ENCODE measurements at regions of chr7 and their contacts with region 1.

Region 1: DNA sequence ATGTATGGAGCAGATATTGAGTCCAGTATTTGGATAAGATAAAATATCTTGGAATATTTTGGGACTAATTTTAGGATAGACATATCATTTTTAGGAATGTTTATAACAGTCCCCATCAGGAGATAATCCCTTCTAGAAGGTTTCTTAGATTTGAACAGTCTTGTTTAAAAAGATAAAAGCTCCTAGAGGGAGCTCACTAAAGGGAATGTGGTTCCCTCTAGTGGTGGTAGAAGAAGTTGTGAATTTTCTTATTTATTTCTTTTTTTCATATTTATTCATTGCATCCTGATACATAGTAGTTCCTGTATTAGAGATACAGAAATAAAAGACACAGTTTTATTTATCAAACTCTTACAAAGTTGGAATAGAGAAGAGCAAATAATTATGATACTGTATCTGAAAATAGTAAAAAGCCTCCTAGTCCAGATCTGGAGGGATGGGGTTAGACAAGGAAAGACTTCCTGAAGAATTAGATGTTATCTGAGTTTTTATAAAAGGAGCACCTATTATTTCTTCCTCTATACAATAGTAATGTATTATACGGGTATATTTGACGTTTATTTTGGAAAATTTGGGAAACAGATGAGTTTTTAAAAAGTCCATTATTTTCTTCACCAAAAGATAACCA is 24.5 kb upstream of the KLF14 start:
- DNase-seq: no peak
- H3K4me3 Mint-ChIP-seq: no peak overlapping the region
- H3K27ac Mint-ChIP-seq: no peak overlapping the region
- H3K4me1 Mint-ChIP-seq: no peaks in the 10 kb centered on the region
- H3K27me3 Mint-ChIP-seq: peaks cover 7% of the 10 kb centered on the region

Region 2: DNA sequence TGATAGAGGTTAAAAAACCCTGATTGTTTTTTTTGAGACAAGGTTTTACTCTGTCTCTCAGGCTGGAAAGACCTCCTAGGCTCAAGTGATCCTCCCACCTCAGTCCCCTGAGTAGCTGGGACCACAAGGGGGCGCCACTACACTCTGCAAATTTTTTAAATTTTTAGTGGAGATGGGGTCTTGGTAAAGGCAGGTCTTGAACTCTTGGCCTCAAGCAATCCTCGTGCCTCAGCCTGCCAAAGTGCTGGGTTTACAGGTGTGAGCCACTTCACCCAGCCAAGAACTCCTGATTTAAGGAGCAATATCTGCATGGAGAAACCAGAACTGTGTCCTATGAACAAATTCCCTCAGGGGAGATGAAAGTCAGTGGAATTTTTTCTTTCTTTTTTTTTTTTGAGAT is 695.5 kb before region 1 on chr7:
- CTCF ChIA-PET with region 1: interaction called, 3 read pairs
- POLR2A ChIA-PET with region 1: no interaction called
- intact Hi-C with region 1: loop called (anchors 1 kb)
- DNase-seq: peak; percentile 83
- H3K4me3 Mint-ChIP-seq: no peak overlapping the region
- H3K27ac Mint-ChIP-seq: no peak overlapping the region
- H3K4me1 Mint-ChIP-seq: no peaks in the 10 kb centered on the region
- H3K27me3 Mint-ChIP-seq: peaks cover 5% of the 10 kb centered on the region

Region 3: GRCh38 chr7:130400120-130400591 is 358.4 kb before region 1 on chr7:
- CTCF ChIA-PET with region 1: no interaction called
- POLR2A ChIA-PET with region 1: no interaction called
- intact Hi-C with region 1: no loop called
- DNase-seq: no peak
- H3K4me3 Mint-ChIP-seq: no peak overlapping the region
- H3K27ac Mint-ChIP-seq: no peak overlapping the region
- H3K4me1 Mint-ChIP-seq: no peaks in the 10 kb centered on the region
- H3K27me3 Mint-ChIP-seq: no peaks in the 10 kb centered on the region

Region 4: GRCh38 chr7:130486114-130486958 is 272.2 kb before region 1 on chr7:
- CTCF ChIA-PET with region 1: interaction called, 14 read pairs
- POLR2A ChIA-PET with region 1: no interaction called
- intact Hi-C with region 1: loop called (anchors 5 kb)
- DNase-seq: peak; percentile 65
- H3K4me3 Mint-ChIP-seq: peak overlapping the region; percentile 63
- H3K27ac Mint-ChIP-seq: no peak overlapping the region
- H3K4me1 Mint-ChIP-seq: peaks cover 17% of the 10 kb centered on the region
- H3K27me3 Mint-ChIP-seq: peaks cover 56% of the 10 kb centered on the region

Region 5: DNA sequence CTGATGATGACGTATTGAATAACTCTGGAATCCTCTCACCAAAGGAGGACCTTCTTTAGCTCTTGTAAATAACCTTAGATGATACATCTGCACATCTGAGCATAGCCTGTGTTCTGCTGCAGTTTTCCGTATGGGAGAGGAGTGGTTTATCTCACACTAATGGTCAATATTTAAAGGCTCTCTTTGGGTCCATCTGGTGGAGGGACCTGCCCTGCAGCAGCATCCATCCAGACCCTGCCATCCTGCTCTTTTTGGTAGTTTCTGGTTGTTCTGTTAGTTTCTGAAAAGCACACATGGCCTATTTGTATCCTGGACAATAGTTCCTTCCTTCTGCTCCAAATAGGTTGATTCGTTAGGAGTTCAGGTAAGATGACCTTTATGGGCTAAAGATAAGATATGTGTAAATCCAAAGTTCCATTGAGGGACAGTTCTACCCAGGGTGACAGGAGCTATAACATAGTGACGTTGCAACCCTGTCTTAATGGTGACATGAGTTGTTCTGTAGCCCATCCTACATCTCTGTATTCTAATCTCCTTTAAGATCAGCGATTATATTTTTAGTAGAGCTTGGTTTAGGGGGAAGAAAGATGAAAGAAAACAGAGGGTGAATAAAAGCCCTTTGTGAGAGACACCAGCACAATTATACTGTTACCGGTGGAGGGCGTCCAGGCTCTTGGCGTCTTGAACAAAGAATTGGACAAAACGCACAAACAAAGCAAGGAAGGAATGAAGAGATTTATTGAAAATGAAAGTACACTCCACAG is 35.5 kb after region 1 on chr7:
- CTCF ChIA-PET with region 1: no interaction called
- POLR2A ChIA-PET with region 1: no interaction called
- intact Hi-C with region 1: no loop called
- DNase-seq: no peak
- H3K4me3 Mint-ChIP-seq: no peak overlapping the region
- H3K27ac Mint-ChIP-seq: no peak overlapping the region
- H3K4me1 Mint-ChIP-seq: no peaks in the 10 kb centered on the region
- H3K27me3 Mint-ChIP-seq: peaks cover 6% of the 10 kb centered on the region

Region 6: GRCh38 chr7:130831817-130832481 is 73.4 kb after region 1 on chr7:
- CTCF ChIA-PET with region 1: interaction called, 15 read pairs
- POLR2A ChIA-PET with region 1: no interaction called
- intact Hi-C with region 1: loop called (anchors 2 kb)
- DNase-seq: no peak
- H3K4me3 Mint-ChIP-seq: no peak overlapping the region
- H3K27ac Mint-ChIP-seq: no peak overlapping the region
- H3K4me1 Mint-ChIP-seq: no peaks in the 10 kb centered on the region
- H3K27me3 Mint-ChIP-seq: peaks cover 23% of the 10 kb centered on the region

Region 7: GRCh38 chr7:130845581-130846085 is 87.1 kb after region 1 on chr7:
- CTCF ChIA-PET with region 1: no interaction called
- POLR2A ChIA-PET with region 1: no interaction called
- intact Hi-C with region 1: no loop called
- DNase-seq: no peak
- H3K4me3 Mint-ChIP-seq: no peak overlapping the region
- H3K27ac Mint-ChIP-seq: no peak overlapping the region
- H3K4me1 Mint-ChIP-seq: peaks cover 5% of the 10 kb centered on the region
- H3K27me3 Mint-ChIP-seq: peaks cover 25% of the 10 kb centered on the region

Region 8: DNA sequence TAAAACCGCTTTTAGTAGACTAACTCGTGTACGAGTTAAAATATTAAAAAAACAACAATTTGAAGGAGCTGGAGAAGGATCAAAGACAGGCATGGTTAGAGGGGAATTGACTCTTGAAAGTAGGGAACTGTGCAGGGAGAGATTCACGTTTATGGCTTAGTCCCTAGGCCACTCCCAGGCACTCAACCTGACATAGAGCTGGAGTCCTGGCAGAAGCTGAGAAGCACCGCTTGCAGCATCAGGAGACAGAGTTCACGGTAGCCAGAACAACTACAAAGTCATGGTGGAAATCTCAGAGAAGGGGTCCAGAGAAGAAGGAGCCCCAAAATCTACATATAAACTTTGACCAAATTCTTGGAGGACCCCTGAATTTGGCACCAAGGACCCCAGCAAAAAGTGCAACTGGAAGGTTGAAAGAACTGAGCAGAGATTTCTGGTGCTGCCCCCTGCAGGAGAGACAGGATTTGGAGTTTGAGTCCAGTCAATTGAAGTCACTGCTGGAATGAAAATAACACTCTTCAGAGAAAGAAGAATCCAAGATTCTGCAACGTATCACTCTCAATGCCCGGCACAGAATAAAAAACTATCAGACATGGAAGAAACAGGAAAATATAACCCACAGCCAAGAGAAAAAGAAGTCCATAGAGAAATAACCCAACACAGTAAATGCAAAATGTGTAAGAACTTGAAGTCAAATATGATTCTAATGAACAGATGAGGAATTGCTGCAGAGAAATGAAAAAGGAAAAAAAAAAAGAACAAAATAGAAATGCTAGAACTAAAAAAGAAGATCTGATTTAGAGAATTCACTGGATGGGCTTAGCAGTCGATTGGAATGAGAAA is 1291.1 kb after region 1 on chr7:
- CTCF ChIA-PET with region 1: no interaction called
- POLR2A ChIA-PET with region 1: no interaction called
- intact Hi-C with region 1: no loop called
- DNase-seq: peak; percentile 38
- H3K4me3 Mint-ChIP-seq: no peak overlapping the region
- H3K27ac Mint-ChIP-seq: no peak overlapping the region
- H3K4me1 Mint-ChIP-seq: no peaks in the 10 kb centered on the region
- H3K27me3 Mint-ChIP-seq: peaks cover 4% of the 10 kb centered on the region

Measured in activated CD4-positive, alpha-beta memory T cell treated with anti-CD3 and anti-CD28 coated beads for 36 hours (primary cell).